ENCODE measurements at regions of chr14 and their contacts with region 1.

Region 1: DNA sequence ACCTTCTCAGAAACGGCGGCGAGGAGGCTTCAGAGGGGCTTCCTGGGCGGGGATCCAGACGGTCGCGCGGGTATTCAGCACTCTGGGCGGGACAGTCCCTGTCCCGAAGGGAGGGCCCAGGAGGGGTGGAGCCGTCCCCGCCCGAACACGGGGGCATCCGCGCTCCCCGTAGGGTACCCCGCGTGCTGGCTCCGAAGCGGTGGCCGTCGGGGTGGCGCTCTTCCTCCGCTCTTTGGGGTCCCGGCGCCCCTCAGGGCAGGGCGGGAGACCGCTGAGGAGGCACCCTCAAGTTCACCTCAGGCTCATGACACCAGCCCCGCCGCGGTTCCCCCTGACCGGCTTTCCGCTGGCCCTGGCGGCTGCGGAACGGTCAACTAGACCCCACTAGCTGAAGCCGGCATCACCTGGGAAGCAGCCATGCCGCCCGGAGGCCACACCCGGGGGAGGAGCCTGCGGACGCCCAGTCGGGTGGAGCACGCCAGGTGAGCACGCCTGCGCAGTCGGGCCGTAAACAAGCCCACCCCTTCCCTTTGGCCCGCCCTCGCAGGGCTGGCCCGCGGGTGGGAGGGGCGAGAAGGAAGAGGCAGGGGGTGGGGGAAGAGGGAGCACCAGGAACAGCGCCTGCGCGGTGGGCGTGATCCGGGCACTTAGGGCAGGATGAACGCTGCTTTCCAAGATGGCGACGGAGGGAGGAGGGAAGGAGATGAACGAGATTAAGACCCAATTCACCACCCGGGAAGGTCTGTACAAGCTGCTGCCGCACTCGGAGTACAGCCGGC is at the start of gene WDR20:
- DNase-seq: peak; percentile 100
- ATAC-seq: peak; percentile 94
- H3K4me3 Mint-ChIP-seq: peak within 1 kb of the TSS; percentile 96
- H3K27ac Mint-ChIP-seq: peak within 1 kb of the TSS; percentile 94
- H3K4me1 Mint-ChIP-seq: peaks cover 21% of the 10 kb centered on the region
- H3K27me3 Mint-ChIP-seq: no peaks in the 10 kb centered on the region
- total RNA-seq, gene WDR20: 18.2 to 24.8 TPM

Region 2: DNA sequence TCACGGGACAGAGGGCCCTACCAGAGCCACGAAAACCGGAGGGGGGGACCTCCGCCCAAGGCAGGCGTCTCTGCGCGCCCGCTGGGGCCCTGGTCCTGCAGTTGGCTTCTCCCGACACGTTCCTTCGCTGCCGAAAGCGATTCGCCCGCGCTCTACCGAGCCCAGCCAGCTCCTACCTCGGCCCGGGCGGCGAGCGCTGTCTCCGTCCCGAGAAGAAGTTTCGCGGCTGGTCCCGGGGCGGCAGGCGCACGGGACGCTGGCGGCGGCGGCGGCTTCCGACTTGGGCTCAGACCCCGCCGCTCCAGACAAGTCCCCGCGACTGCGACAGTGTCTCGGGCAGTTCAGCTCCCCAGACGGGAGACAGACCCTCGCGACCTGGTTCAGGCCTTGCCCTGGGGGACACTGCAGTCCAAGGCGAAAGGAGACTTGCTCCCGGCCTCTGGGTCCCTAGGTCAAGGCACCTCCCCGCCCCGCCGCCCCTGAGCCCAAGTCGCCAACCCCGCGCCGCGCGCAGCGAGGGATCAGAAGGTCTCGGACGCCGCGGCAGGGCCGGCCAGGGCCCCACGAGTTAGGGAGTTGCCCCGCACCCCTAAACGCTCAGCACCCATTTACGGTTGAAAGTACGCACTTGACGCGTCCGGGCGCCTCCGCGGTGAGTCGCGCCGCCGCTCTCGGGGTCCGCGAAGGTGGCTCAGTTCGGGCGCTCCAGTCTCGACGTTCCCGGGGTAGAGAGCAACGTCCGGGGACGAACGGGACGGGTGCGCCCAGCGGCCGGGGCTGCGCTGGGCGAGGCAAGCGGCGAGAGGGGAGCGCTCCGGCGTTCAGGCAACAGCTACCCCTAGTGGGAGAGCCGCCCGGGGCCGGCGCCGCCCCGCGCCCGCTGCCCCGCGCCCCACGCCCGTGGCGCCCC is 579.6 kb before region 1 on chr14:
- CTCF ChIA-PET with region 1: no interaction called
- POLR2A ChIA-PET with region 1: no interaction called
- intact Hi-C with region 1: no loop called
- DNase-seq: peak; percentile 38
- ATAC-seq: peak; percentile 39
- H3K4me3 Mint-ChIP-seq: no peak overlapping the region
- H3K27ac Mint-ChIP-seq: no peak overlapping the region
- H3K4me1 Mint-ChIP-seq: peaks cover 3% of the 10 kb centered on the region
- H3K27me3 Mint-ChIP-seq: peaks cover 40% of the 10 kb centered on the region

Region 3: GRCh38 chr14:102096214-102097114 is 43.0 kb before region 1 on chr14:
- CTCF ChIA-PET with region 1: no interaction called
- POLR2A ChIA-PET with region 1: no interaction called
- intact Hi-C with region 1: loop called (anchors 2 kb)
- DNase-seq: peak; percentile 82
- ATAC-seq: peak; percentile 57
- H3K4me3 Mint-ChIP-seq: no peak overlapping the region
- H3K27ac Mint-ChIP-seq: peak overlapping the region; percentile 51
- H3K4me1 Mint-ChIP-seq: peaks cover 22% of the 10 kb centered on the region
- H3K27me3 Mint-ChIP-seq: no peaks in the 10 kb centered on the region

Region 4: GRCh38 chr14:102187058-102187457 is 47.6 kb after region 1 on chr14:
- CTCF ChIA-PET with region 1: interaction called, 5 read pairs
- POLR2A ChIA-PET with region 1: no interaction called
- intact Hi-C with region 1: loop called (anchors 1 to 5 kb)
- DNase-seq: no peak
- ATAC-seq: no peak
- H3K4me3 Mint-ChIP-seq: no peak overlapping the region
- H3K27ac Mint-ChIP-seq: peak overlapping the region; percentile 79
- H3K4me1 Mint-ChIP-seq: peaks cover 61% of the 10 kb centered on the region
- H3K27me3 Mint-ChIP-seq: no peaks in the 10 kb centered on the region

Region 5: GRCh38 chr14:102200690-102201352 is 61.4 kb after region 1 on chr14:
- CTCF ChIA-PET with region 1: no interaction called
- POLR2A ChIA-PET with region 1: no interaction called
- intact Hi-C with region 1: loop called (anchors 2 kb)
- DNase-seq: peak; percentile 24
- ATAC-seq: peak; percentile 46
- H3K4me3 Mint-ChIP-seq: peak overlapping the region; percentile 24
- H3K27ac Mint-ChIP-seq: peak overlapping the region; percentile 56
- H3K4me1 Mint-ChIP-seq: peaks cover 59% of the 10 kb centered on the region
- H3K27me3 Mint-ChIP-seq: no peaks in the 10 kb centered on the region

Region 6: GRCh38 chr14:102304611-102305509 is 165.4 kb after region 1 on chr14 and contains the start of gene MOK:
- CTCF ChIA-PET with region 1: no interaction called
- POLR2A ChIA-PET with region 1: no interaction called
- intact Hi-C with region 1: loop called in 1 of 2 experiments (anchors 1 kb)
- DNase-seq: peak; percentile 97
- ATAC-seq: peak; percentile 98
- H3K4me3 Mint-ChIP-seq: peak within 1 kb of the TSS; percentile 93
- H3K27ac Mint-ChIP-seq: peak within 1 kb of the TSS; percentile 60
- H3K4me1 Mint-ChIP-seq: peaks cover 5% of the 10 kb centered on the region
- H3K27me3 Mint-ChIP-seq: no peaks in the 10 kb centered on the region
- total RNA-seq, gene MOK: 6.5 to 6.6 TPM

Region 7: GRCh38 chr14:102352213-102352612 is 212.8 kb after region 1 on chr14:
- CTCF ChIA-PET with region 1: no interaction called
- POLR2A ChIA-PET with region 1: no interaction called
- intact Hi-C with region 1: no loop called
- DNase-seq: no peak
- ATAC-seq: no peak
- H3K4me3 Mint-ChIP-seq: no peak overlapping the region
- H3K27ac Mint-ChIP-seq: no peak overlapping the region
- H3K4me1 Mint-ChIP-seq: peaks cover 5% of the 10 kb centered on the region
- H3K27me3 Mint-ChIP-seq: no peaks in the 10 kb centered on the region

Region 8: DNA sequence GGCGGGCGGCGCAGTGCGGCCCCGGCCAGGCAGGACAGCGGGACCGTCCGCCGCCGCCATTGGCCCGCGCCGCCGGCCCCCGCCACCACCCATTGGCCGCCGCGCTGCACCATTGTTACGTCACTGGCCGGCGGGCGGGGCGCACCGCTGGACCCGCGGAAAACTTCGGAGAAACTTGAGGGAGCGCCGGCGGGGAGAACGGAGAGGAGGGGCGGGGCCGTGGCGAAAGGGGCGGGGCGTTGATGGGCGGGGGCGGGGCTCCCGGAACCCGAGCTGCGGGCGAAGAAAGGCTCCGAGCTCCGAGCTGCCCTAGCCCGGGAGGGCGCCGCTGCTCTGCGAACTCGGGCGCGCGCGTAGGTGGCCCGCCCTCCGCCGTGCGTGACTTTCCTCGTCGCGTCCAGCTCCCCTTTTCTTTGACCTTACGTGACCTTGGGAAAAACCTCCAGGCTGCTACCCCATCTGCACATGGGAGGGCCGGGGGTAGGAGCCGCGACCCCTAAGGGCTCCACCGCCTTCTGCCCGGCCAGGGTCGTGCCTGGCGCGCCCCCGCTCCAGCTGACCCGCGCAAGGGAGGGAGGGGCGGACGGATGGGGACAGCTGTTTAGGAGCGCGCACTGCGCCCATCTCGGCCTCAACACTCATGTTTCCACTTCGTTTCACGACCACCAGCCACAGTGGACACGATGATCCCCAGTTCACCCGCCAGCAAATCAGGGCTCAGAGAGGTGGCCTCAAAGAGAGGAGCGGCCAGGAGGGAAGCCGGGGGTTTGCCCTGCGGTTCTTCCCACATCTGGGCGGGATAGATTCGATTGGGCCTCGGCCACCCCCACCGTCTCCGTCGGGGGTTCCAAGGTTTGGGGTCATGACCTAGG is 370.5 kb after region 1 on chr14 and contains the start of gene ANKRD9:
- CTCF ChIA-PET with region 1: no interaction called
- POLR2A ChIA-PET with region 1: no interaction called
- intact Hi-C with region 1: loop called in 1 of 2 experiments (anchors 2 kb)
- DNase-seq: peak; percentile 95
- ATAC-seq: peak; percentile 89
- H3K4me3 Mint-ChIP-seq: peak within 1 kb of the TSS; percentile 75
- H3K27ac Mint-ChIP-seq: peak within 1 kb of the TSS; percentile 51
- H3K4me1 Mint-ChIP-seq: peaks cover 16% of the 10 kb centered on the region
- H3K27me3 Mint-ChIP-seq: peaks cover 2% of the 10 kb centered on the region
- total RNA-seq, gene ANKRD9: 4.8 to 9.3 TPM

Measured in activated CD4-positive, alpha-beta T cell treated with anti-CD3 and anti-CD28 coated beads for 36 hours (primary cell).